ENCODE measurements at regions of chr1 and their contacts with region 1.

Region 1: GRCh38 chr1:56584910-56585528 is 5.7 kb upstream of the PLPP3 start:
- DNase-seq: peak in 1 of 3 donors; percentile 66
- ATAC-seq: peak; percentile 64
- H3K4me3 ChIP-seq: no peak overlapping the region
- H3K4me1 ChIP-seq: no peaks in the 10 kb centered on the region
- CTCF ChIP-seq: peak; percentile 40

Region 2: GRCh38 chr1:55375617-55376258 is 1209.3 kb before region 1 on chr1:
- intact Hi-C with region 1: loop called (anchors 10 kb)
- DNase-seq: peak in 2 of 3 donors; percentile 28 to 42
- ATAC-seq: peak; percentile 74
- H3K4me3 ChIP-seq: no peak overlapping the region
- H3K4me1 ChIP-seq: no peaks in the 10 kb centered on the region
- CTCF ChIP-seq: peak; percentile 81

Region 3: GRCh38 chr1:56284928-56285327 is 300.1 kb before region 1 on chr1:
- intact Hi-C with region 1: no loop called
- DNase-seq: no peak
- ATAC-seq: no peak
- H3K4me3 ChIP-seq: no peak overlapping the region
- H3K4me1 ChIP-seq: no peaks in the 10 kb centered on the region
- CTCF ChIP-seq: no peak

Region 4: GRCh38 chr1:56696663-56697062 is 111.6 kb after region 1 on chr1:
- intact Hi-C with region 1: no loop called
- DNase-seq: no peak
- ATAC-seq: no peak
- H3K4me3 ChIP-seq: no peak overlapping the region
- H3K4me1 ChIP-seq: no peaks in the 10 kb centered on the region
- CTCF ChIP-seq: no peak

Measured in mucosa of descending colon (tissue), 3 donors.